ENCODE measurements at regions of chr20 and their contacts with region 1.

Region 1: GRCh38 chr20:38165089-38165989 is at the start of gene TGM2:
- DNase-seq: peak; percentile 92
- ATAC-seq: peak; percentile 89
- total RNA-seq, gene TGM2: 473 TPM

Region 2: GRCh38 chr20:38073307-38074071 is 91.8 kb before region 1 on chr20:
- intact Hi-C with region 1: loop called (anchors 10 kb)
- DNase-seq: peak; percentile 69
- ATAC-seq: peak; percentile 83

Region 3: DNA sequence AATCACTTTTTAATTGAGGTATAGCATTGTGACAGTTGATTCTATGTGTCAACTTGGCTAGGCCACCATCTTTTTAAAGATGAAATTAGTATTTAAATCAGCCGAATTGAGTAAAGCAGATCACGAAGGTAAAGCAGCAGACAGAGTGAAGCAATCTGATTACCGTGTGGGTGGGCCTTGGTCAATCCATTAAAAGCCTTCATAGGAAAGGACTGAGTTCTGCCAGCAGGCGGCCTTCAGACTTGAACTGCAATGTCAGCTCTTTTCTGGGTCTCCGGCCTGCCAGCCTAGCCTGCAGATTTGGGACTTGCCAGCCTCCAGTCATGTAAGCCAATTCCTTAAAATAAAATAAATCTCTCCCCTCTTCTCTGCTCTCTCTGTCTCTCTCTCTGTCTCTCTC is 22.2 kb after region 1 on chr20:
- intact Hi-C with region 1: no loop called
- DNase-seq: no peak
- ATAC-seq: no peak

Region 4: DNA sequence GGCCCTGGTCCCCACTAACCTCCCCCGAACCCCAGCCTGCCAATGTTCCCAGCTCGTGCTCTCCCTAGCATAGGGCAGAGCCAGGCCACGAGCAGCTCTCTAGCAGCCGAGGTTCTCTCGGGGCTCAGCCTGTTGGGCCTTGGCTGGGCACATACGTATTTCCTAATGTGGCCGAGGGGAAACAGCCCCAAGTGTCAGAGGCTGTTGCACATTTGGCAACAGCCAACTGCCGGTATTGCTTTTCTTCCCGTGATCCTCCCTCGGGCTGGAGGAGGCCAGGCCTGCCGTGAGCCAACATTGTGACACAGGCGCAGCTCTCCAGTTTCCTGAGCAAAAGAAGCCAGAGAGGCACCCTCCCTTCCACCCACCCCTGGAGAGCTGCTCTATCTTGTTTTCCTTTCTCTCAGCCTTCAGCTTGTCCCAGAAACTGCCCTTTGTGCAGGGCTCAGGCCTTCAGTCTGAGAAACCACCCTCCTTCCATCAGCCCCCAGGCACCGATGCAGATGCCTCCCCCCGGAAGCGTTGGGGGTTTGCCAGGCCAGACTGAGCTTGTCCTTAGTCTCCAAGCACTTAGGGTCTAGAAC is 133.5 kb after region 1 on chr20:
- intact Hi-C with region 1: no loop called
- DNase-seq: peak; percentile 83
- ATAC-seq: peak; percentile 97

Region 5: GRCh38 chr20:38336726-38337125 is 171.4 kb after region 1 on chr20:
- intact Hi-C with region 1: no loop called
- DNase-seq: no peak
- ATAC-seq: no peak